ENCODE measurements at regions of chr15 and their contacts with region 1.

Region 1: GRCh38 chr15:34241372-34242330 is 16.8 kb downstream of the EMC4 start:
- DNase-seq: peak; percentile 80
- H3K4me3 Mint-ChIP-seq: no peak overlapping the region
- H3K27ac Mint-ChIP-seq: no peak overlapping the region
- H3K4me1 Mint-ChIP-seq: peaks cover 21% of the 10 kb centered on the region
- H3K27me3 Mint-ChIP-seq: no peaks in the 10 kb centered on the region

Region 2: DNA sequence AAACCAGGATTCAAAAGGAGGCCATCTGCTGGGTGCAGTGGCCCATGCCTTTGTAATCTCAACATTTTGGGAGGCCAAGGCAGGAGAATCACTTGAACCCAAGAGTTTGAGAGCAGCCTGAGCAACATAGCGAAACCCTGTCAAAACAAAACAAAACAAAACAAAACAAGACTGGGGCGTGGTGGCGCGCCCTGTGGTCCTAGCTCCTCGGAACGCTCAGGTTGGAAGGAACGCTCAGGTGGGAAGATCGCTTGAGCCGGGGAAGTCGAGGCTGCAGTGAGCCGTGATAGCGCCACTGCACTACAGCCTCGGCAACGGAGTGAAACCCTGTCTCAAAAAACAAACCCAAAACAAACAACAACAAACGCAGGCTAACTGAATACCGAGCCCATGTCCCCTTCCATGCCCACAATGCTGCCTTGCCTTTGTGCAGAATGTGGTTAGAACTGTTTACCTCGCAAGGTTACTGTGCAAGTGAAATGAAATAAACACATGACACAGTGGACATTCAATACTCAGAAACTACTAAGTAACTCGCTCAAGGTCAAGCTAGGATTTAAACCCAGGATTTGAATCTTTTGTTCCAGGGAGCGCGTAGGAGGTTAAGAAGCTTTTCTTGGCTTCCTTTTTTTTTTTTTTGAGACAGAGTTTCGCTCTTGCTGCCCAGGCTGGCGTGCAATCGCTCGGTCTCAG is 17.6 kb before region 1 on chr15:
- intact Hi-C with region 1: loop called (anchors 1 kb)
- DNase-seq: peak; percentile 60
- H3K4me3 Mint-ChIP-seq: peak overlapping the region; percentile 95
- H3K27ac Mint-ChIP-seq: peak overlapping the region; percentile 89
- H3K4me1 Mint-ChIP-seq: peaks cover 26% of the 10 kb centered on the region
- H3K27me3 Mint-ChIP-seq: no peaks in the 10 kb centered on the region

Region 3: GRCh38 chr15:34337557-34338306 is 96.1 kb after region 1 on chr15 and contains the start of gene SLC12A6:
- intact Hi-C with region 1: loop called (anchors 2 kb)
- DNase-seq: peak; percentile 98
- H3K4me3 Mint-ChIP-seq: peak within 1 kb of the TSS; percentile 97
- H3K27ac Mint-ChIP-seq: peak within 1 kb of the TSS; percentile 94
- H3K4me1 Mint-ChIP-seq: peaks cover 43% of the 10 kb centered on the region
- H3K27me3 Mint-ChIP-seq: no peaks in the 10 kb centered on the region
- total RNA-seq, gene SLC12A6: 18.4 and 19.4 TPM in 2 replicates